K562 (cell line): ENCODE measurements at regions of chr7 and their contacts with region 1.

Region 1: DNA sequence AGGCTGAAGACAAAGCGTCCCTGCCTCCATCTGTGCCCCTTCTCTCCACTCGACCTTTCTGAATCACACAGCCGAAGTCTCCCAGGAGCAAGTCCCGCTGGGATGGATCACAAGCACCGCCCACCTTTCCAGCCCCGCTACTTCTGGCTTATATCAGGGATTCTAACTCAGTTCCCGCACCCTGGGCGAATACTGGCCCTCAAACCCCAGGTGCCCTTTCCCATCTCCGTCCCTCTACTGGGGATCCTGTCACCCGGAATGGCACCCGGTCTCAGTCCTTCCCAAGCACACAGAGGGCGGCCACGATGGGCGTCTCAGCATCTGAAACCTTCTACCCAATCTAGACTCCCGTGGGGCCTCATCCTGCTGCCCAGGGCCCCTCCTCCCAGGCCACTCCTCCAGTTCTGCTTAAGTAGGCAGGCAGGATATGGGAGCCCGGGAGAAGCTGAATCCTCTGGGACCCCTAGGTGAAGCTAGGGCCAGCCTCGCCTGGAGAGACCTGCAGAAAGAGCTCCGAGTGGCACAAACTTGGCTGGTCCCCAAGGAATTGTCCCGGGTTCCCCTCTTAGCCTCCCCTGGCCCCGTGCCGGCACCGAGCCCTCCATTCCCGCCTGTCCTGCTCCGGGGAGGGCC is 768 bp downstream of the KCP start:
- DNase-seq: no peak
- ATAC-seq: no peak
- H3K4me3 ChIP-seq: no peak overlapping the region
- H3K27ac ChIP-seq: no peak overlapping the region
- H3K4me1 ChIP-seq: peaks cover 0 to 30% of the 10 kb centered on the region in 2 experiments; a peak in 2 of 5 replicates
- H3K27me3 ChIP-seq: peaks cover 44 to 74% of the 10 kb centered on the region in 2 experiments
- CTCF ChIP-seq: no peak
- EP300 ChIP-seq: no peak
- POLR2A ChIP-seq: no peak
- RAD21 ChIP-seq: no peak

Region 2: GRCh38 chr7:128919881-128920799 is 10.4 kb after region 1 on chr7:
- CTCF ChIA-PET with region 1: no interaction called
- POLR2A ChIA-PET with region 1: interaction called, 10 read pairs
- in situ Hi-C with region 1: no loop called
- intact Hi-C with region 1: no loop called
- DNase-seq: peak in 1 of 4 experiments; percentile 36
- ATAC-seq: peak; percentile 54
- H3K4me3 ChIP-seq: no peak overlapping the region
- H3K27ac ChIP-seq: no peak overlapping the region
- H3K4me1 ChIP-seq: peaks cover 0 to 10% of the 10 kb centered on the region in 2 experiments; a peak in 2 of 5 replicates
- H3K27me3 ChIP-seq: peaks cover 75 to 82% of the 10 kb centered on the region in 2 experiments
- CTCF ChIP-seq: peak; percentile 33 to 50 (median 35); a peak in 3 of 6 replicates
- EP300 ChIP-seq: no peak
- POLR2A ChIP-seq: no peak
- RAD21 ChIP-seq: peak in 1 of 2 experiments; percentile 53; a peak in 2 of 4 replicates